Endothelial cell of umbilical vein (primary cell): ENCODE measurements at regions of chr10 and their contacts with region 1.

Region 1: GRCh38 chr10:33115738-33116719 is 158.0 kb upstream of the ITGB1 start:
- DNase-seq: peak; percentile 81
- H3K4me3 ChIP-seq: no peak overlapping the region
- H3K27ac ChIP-seq: no peak overlapping the region
- H3K4me1 ChIP-seq: peaks cover 3% of the 10 kb centered on the region
- H3K27me3 ChIP-seq: no peaks in the 10 kb centered on the region
- CTCF ChIP-seq: peak; percentile 75 to 77
- POLR2A ChIP-seq: no peak

Region 2: GRCh38 chr10:32948451-32948850 is 167.6 kb before region 1 on chr10:
- CTCF ChIA-PET with region 1: no interaction called
- POLR2A ChIA-PET with region 1: no interaction called
- dilution Hi-C with region 1: no loop called
- intact Hi-C with region 1: no loop called
- DNase-seq: no peak
- H3K4me3 ChIP-seq: no peak overlapping the region
- H3K27ac ChIP-seq: no peak overlapping the region
- H3K4me1 ChIP-seq: peaks cover 42% of the 10 kb centered on the region
- H3K27me3 ChIP-seq: no peaks in the 10 kb centered on the region
- CTCF ChIP-seq: no peak
- POLR2A ChIP-seq: no peak

Region 3: GRCh38 chr10:33032654-33033151 is 83.3 kb before region 1 on chr10:
- CTCF ChIA-PET with region 1: interaction called, 16 read pairs
- POLR2A ChIA-PET with region 1: no interaction called
- dilution Hi-C with region 1: no loop called
- intact Hi-C with region 1: no loop called
- DNase-seq: peak; percentile 96
- H3K4me3 ChIP-seq: no peak overlapping the region
- H3K27ac ChIP-seq: peak overlapping the region; percentile 67
- H3K4me1 ChIP-seq: peaks cover 16% of the 10 kb centered on the region
- H3K27me3 ChIP-seq: no peaks in the 10 kb centered on the region
- CTCF ChIP-seq: no peak
- POLR2A ChIP-seq: no peak

Region 4: GRCh38 chr10:33100781-33101391 is 15.1 kb before region 1 on chr10:
- CTCF ChIA-PET with region 1: interaction called, 30 read pairs
- POLR2A ChIA-PET with region 1: no interaction called
- dilution Hi-C with region 1: no loop called
- intact Hi-C with region 1: no loop called
- DNase-seq: no peak
- H3K4me3 ChIP-seq: no peak overlapping the region
- H3K27ac ChIP-seq: no peak overlapping the region
- H3K4me1 ChIP-seq: no peaks in the 10 kb centered on the region
- H3K27me3 ChIP-seq: no peaks in the 10 kb centered on the region
- CTCF ChIP-seq: no peak
- POLR2A ChIP-seq: no peak

Region 5: DNA sequence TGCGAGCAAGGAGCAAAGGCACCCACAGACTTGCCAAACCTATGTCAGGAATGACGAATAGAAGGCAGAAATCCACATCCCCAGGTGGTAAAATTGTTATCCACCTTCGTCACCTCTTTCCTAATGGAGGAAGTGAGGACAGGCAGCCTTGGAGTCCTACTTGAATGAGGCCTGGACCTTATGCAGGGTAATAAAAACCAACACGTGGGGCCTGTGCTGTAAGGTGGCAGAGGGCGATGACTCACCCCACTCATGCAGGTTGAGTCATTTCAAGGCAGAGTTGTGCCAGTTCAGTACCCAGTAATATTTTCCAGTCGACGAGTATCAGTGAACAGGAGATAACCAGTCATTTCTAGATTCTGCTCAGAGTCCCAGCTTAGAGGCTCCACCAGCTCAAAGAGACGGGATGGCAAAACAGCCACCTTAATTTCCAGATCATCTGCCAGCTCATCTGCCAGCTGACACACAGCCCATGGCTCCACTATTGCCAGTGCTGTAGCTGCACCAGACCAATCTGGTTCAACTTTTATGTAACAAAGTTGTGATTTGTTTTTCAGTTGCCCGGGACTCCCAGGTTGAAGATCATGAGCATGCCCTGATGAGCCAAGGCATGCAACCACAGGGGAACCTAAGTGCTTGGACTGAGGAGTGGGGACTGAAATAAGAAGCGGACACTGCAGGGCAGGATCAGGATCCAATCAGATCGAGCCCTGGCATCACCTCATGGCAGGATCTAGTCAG is 18.2 kb after region 1 on chr10:
- CTCF ChIA-PET with region 1: interaction called, 11 read pairs
- POLR2A ChIA-PET with region 1: no interaction called
- dilution Hi-C with region 1: no loop called
- intact Hi-C with region 1: no loop called
- DNase-seq: peak; percentile 90
- H3K4me3 ChIP-seq: no peak overlapping the region
- H3K27ac ChIP-seq: no peak overlapping the region
- H3K4me1 ChIP-seq: peaks cover 5% of the 10 kb centered on the region
- H3K27me3 ChIP-seq: no peaks in the 10 kb centered on the region
- CTCF ChIP-seq: no peak
- POLR2A ChIP-seq: no peak

Region 6: GRCh38 chr10:33155720-33156638 is 40.0 kb after region 1 on chr10:
- CTCF ChIA-PET with region 1: interaction called, 23 read pairs
- POLR2A ChIA-PET with region 1: no interaction called
- dilution Hi-C with region 1: no loop called
- intact Hi-C with region 1: loop called (anchors 5 kb)
- DNase-seq: no peak
- H3K4me3 ChIP-seq: no peak overlapping the region
- H3K27ac ChIP-seq: no peak overlapping the region
- H3K4me1 ChIP-seq: peaks cover 10% of the 10 kb centered on the region
- H3K27me3 ChIP-seq: peaks cover 0 to 4% of the 10 kb centered on the region in 2 experiments
- CTCF ChIP-seq: peak; percentile 39 to 50
- POLR2A ChIP-seq: no peak

Region 7: DNA sequence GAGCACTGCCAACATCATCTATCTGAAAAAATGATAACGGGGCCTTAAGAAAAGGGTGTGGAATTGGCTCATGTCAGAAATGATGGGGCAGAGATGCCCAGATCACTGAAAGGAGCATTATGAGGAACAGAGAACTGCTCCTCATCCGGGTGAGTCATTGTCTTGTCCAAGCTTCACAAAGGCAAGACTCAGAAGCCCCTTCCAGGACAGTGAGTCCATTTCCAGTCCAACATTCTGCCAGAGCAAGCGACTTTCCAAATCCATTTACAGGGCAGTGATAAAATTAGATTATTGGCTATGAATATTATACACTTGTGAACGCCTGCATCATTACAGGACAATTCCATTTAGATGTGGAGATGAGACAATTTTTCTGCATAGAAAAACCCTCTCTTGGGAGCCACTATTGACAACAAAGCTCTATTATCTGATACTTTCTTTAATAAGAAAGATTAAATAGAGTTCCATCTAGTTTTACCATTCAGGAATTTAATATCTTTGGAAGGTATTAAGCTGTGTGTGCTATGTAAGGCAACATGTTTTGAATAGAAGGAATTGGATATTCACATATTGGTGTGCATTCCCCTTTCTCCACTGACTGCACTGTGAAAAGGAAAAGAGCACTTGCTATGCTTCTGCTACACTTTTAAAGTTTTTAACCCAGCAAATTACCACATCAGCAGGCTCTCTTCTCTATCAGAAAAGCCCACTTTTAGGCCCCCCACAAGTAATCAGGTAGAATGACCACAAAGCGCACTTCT is 58.8 kb after region 1 on chr10:
- CTCF ChIA-PET with region 1: interaction called, 10 read pairs
- POLR2A ChIA-PET with region 1: no interaction called
- dilution Hi-C with region 1: no loop called
- intact Hi-C with region 1: loop called (anchors 5 kb)
- DNase-seq: no peak
- H3K4me3 ChIP-seq: no peak overlapping the region
- H3K27ac ChIP-seq: no peak overlapping the region
- H3K4me1 ChIP-seq: peaks cover 26% of the 10 kb centered on the region
- H3K27me3 ChIP-seq: no peaks in the 10 kb centered on the region
- CTCF ChIP-seq: no peak
- POLR2A ChIP-seq: peak; percentile 29

Region 8: GRCh38 chr10:33180390-33180789 is 64.4 kb after region 1 on chr10:
- CTCF ChIA-PET with region 1: interaction called, 10 read pairs
- POLR2A ChIA-PET with region 1: no interaction called
- dilution Hi-C with region 1: no loop called
- intact Hi-C with region 1: loop called (anchors 5 kb)
- DNase-seq: no peak
- H3K4me3 ChIP-seq: no peak overlapping the region
- H3K27ac ChIP-seq: peak overlapping the region; percentile 3
- H3K4me1 ChIP-seq: peaks cover 26% of the 10 kb centered on the region
- H3K27me3 ChIP-seq: no peaks in the 10 kb centered on the region
- CTCF ChIP-seq: no peak
- POLR2A ChIP-seq: no peak